Prostate gland (tissue), 2 donors: ENCODE measurements at regions of chr7 and their contacts with region 1.

Region 1: DNA sequence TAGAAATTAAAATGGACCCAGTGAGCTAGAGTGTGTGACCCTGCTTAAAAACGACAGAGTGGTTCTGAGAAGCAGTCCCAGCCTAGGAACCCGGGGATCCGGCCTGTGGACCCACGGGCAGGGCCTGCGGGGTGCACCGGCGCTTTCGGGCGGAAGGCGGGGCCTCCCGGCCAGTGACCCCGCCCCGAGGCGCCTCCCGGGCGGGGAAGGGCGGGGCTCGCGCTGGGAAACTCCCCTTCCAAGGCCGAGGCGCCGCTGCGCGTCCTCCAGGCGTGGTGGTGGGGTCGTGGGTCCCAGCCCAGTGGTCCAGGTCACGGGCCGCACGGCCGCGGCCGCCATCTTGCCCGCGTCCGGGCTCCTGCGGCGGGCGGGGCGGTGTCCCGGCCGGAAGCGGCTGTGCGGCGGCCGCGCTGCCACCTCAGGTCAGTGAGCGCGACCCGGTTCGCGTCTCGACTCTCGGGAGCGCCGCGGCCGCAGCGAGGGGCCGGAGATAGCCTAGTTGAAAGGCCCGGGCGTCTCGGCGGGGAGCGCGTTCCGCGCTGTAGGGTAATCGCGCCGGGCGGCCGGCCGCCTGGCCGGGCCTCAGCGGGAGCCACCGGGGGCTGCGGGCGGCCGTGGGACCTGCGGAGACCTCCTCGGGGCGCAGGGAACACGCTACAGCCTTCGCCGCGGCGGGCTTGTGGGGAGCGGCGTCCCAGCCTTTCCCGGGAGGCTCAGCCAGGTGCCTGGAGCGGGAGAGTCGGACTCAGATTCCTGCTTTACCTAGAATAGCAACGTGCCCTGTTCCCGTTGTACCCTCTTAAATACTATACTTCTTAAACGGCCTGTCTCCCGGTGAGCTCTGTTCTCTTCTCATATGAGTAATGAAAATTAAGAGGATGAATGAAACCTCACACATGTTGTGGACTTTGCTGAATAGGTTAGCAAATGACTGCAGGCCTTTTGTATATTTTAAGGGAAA is at the start of gene MIOS:
- DNase-seq: peak; percentile 82
- H3K4me3 ChIP-seq: peak within 1 kb of the TSS; percentile 83 to 95
- H3K27ac ChIP-seq: peak within 1 kb of the TSS; percentile 92 to 98
- H3K4me1 ChIP-seq: peaks cover 4% of the 10 kb centered on the region
- H3K27me3 ChIP-seq: no peaks in the 10 kb centered on the region
- CTCF ChIP-seq: no peak
- POLR2A ChIP-seq: peak; percentile 74
- total RNA-seq, gene MIOS: 52.3 to 85.6 TPM

Region 2: GRCh38 chr7:7182156-7183060 is 384.5 kb before region 1 on chr7 and contains the start of gene C1GALT1:
- intact Hi-C with region 1: loop called (anchors 10 kb)
- DNase-seq: peak; percentile 97
- H3K4me3 ChIP-seq: peak within 1 kb of the TSS; percentile 58 to 83
- H3K27ac ChIP-seq: peak within 1 kb of the TSS; percentile 86 to 93
- H3K4me1 ChIP-seq: no peaks in the 10 kb centered on the region
- H3K27me3 ChIP-seq: no peaks in the 10 kb centered on the region
- CTCF ChIP-seq: peak in 3 of 4 experiments; percentile 7 to 38 (median 34)
- POLR2A ChIP-seq: peak; percentile 85
- total RNA-seq, gene C1GALT1: 16.1 to 16.8 TPM

Region 3: GRCh38 chr7:7489546-7489945 is 77.4 kb before region 1 on chr7:
- intact Hi-C with region 1: no loop called
- DNase-seq: no peak
- H3K4me3 ChIP-seq: no peak overlapping the region
- H3K27ac ChIP-seq: no peak overlapping the region
- H3K4me1 ChIP-seq: no peaks in the 10 kb centered on the region
- H3K27me3 ChIP-seq: no peaks in the 10 kb centered on the region
- CTCF ChIP-seq: no peak
- POLR2A ChIP-seq: no peak

Region 4: DNA sequence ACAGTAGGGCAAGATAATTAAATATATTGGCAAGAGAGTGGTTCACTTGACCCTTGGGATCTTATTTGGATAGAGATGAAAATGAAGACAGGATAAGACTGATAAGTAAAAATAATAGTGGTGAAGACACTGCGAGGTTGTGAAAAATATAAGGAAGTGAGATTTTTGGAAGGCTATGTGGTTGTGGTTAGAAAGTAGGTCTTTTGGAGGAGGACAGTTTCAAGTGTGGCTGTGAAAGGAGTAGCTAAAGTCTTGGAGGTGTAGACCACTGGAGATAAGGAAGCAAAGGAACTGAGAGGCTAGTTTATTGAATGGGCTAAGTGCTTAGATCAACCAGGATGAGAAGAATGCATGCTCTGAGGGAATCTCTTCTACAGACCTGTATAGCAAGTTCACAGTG is 11.0 kb after region 1 on chr7:
- intact Hi-C with region 1: loop called (anchors 1 kb)
- DNase-seq: no peak
- H3K4me3 ChIP-seq: no peak overlapping the region
- H3K27ac ChIP-seq: no peak overlapping the region
- H3K4me1 ChIP-seq: no peaks in the 10 kb centered on the region
- H3K27me3 ChIP-seq: no peaks in the 10 kb centered on the region
- CTCF ChIP-seq: no peak
- POLR2A ChIP-seq: no peak

Region 5: DNA sequence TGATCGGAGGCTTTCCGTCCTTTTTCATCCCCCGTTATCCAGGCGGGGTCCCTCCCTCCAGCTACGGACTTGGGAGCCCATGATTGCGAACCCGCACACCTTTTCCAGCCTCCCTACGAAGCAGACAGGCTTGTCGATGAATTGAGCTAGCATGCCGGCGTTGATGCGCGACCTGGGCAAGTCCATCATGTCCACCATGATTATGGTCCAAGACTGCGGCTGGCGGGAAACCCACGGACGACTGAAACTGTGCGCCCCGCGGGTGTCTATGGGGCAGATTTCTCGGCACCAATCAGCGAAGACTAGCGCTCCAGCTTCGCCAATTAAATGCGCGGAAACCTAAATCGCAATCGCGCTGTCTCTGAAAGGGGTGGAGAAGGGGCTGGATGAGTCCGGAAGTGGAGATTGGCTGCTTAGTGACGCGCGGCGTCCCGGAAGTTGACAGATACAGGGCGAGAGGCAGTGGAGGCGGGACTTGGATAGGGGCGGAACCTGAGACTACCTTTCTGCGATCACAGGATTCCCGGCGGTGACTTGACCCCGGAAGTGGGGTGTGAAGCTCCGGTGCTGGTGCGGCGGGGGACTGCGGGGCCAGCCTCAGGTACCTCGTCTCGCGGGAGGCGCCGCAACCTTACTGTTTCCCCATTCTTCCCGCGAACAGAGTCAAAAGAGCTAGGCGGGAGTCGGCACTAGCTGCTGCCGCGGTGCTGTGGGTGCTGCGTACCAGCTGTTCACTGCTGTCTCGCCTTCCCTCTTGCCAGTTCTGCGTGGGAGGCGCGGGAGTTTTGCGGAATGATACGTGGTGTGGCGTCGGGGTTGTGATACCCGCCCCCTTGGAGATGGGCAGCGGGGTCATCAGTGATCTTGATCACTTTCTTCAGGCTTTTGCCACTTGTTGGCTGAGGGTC is 73.5 kb after region 1 on chr7 and contains the start of gene UMAD1:
- intact Hi-C with region 1: loop called (anchors 2 kb)
- DNase-seq: peak; percentile 99
- H3K4me3 ChIP-seq: peak within 1 kb of the TSS; percentile 78 to 83
- H3K27ac ChIP-seq: peak within 1 kb of the TSS; percentile 95 to 96
- H3K4me1 ChIP-seq: no peaks in the 10 kb centered on the region
- H3K27me3 ChIP-seq: no peaks in the 10 kb centered on the region
- CTCF ChIP-seq: no peak
- POLR2A ChIP-seq: peak; percentile 71
- total RNA-seq, gene UMAD1: 19.5 to 31.4 TPM

Region 6: DNA sequence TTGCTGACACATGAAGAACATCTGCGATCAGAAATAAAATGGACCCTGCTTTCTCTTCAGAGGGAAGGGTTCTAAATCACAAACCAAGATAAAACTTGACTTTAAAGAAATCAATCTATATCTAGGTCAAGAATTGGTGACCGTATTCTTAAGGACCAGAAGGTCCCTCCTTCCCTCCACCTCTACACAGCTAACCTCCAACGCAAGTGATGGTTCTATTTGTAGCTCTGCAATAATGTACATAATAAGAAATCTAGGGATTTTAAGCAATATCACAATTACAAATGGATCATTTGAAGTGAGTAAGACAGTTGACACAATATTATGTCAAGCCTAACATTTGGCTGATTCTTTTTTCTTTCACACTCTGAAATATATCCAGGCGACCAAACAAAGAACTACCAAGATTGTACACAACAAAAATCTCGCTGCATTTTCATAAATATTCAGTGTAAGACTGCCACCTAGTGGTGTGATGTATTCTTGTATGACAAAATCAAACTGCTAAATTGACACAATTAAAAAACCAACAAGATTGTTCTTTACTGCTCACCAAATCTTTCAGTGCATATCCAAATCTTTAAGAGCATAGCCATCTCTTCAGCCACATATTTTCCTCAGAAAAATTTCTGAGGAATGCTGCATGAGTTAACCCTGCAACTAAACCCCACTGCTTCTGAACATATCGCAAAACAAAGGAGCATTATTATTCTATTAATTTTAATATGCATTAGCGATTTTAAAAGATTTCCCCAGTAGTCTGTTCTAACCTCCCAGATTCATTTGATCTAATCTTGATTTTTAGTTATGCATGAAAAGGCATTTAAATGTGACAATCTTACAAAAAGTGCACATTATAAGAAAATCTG is 650.5 kb after region 1 on chr7:
- intact Hi-C with region 1: loop called (anchors 10 kb)
- DNase-seq: peak; percentile 68
- H3K4me3 ChIP-seq: no peak overlapping the region
- H3K27ac ChIP-seq: no peak overlapping the region
- H3K4me1 ChIP-seq: no peaks in the 10 kb centered on the region
- H3K27me3 ChIP-seq: no peaks in the 10 kb centered on the region
- CTCF ChIP-seq: peak; percentile 73 to 89 (median 86)
- POLR2A ChIP-seq: no peak